ENCODE measurements at regions of chr1 and their contacts with region 1.

Region 1: GRCh38 chr1:153532769-153533599 is 2.8 kb downstream of the S100A6 start:
- DNase-seq: peak; percentile 81
- H3K4me3 Mint-ChIP-seq: peak overlapping the region; percentile 96
- H3K27ac Mint-ChIP-seq: peak overlapping the region; percentile 98
- H3K4me1 Mint-ChIP-seq: peaks cover 64% of the 10 kb centered on the region
- H3K27me3 Mint-ChIP-seq: no peaks in the 10 kb centered on the region

Region 2: GRCh38 chr1:153494976-153495535 is 37.9 kb before region 1 on chr1:
- CTCF ChIA-PET with region 1: no interaction called
- POLR2A ChIA-PET with region 1: no interaction called
- DNase-seq: peak; percentile 82
- H3K4me3 Mint-ChIP-seq: no peak overlapping the region
- H3K27ac Mint-ChIP-seq: no peak overlapping the region
- H3K4me1 Mint-ChIP-seq: no peaks in the 10 kb centered on the region
- H3K27me3 Mint-ChIP-seq: peaks cover 28% of the 10 kb centered on the region

Region 3: DNA sequence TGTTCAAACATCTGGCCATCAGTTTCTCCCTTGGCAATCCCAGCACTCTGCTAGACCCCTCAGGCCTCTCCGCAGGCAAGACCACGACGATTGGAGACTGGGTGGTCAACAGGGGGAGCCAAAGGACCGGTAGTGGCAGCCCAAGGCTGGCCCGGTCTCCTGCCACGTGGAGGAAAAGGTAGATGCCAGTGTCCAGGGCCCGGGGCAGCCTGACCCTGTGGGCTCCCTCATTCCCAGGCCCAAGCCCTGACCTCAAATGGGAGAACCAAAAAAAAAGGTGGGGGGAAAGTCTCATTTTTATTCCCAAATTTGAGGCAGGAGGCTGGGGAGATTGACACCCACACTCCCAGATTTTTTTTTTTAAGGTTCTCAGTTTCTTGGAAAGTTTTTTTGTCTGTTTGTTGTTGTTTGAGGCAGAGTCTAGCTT is 22.0 kb before region 1 on chr1:
- CTCF ChIA-PET with region 1: interaction called, 38 read pairs
- POLR2A ChIA-PET with region 1: no interaction called
- DNase-seq: peak; percentile 84
- H3K4me3 Mint-ChIP-seq: no peak overlapping the region
- H3K27ac Mint-ChIP-seq: peak overlapping the region; percentile 38
- H3K4me1 Mint-ChIP-seq: peaks cover 36% of the 10 kb centered on the region
- H3K27me3 Mint-ChIP-seq: no peaks in the 10 kb centered on the region

Region 4: GRCh38 chr1:153553830-153554541 is 21.0 kb after region 1 on chr1:
- CTCF ChIA-PET with region 1: interaction called, 17 read pairs
- POLR2A ChIA-PET with region 1: no interaction called
- DNase-seq: no peak
- H3K4me3 Mint-ChIP-seq: no peak overlapping the region
- H3K27ac Mint-ChIP-seq: no peak overlapping the region
- H3K4me1 Mint-ChIP-seq: peaks cover 9% of the 10 kb centered on the region
- H3K27me3 Mint-ChIP-seq: no peaks in the 10 kb centered on the region

Region 5: DNA sequence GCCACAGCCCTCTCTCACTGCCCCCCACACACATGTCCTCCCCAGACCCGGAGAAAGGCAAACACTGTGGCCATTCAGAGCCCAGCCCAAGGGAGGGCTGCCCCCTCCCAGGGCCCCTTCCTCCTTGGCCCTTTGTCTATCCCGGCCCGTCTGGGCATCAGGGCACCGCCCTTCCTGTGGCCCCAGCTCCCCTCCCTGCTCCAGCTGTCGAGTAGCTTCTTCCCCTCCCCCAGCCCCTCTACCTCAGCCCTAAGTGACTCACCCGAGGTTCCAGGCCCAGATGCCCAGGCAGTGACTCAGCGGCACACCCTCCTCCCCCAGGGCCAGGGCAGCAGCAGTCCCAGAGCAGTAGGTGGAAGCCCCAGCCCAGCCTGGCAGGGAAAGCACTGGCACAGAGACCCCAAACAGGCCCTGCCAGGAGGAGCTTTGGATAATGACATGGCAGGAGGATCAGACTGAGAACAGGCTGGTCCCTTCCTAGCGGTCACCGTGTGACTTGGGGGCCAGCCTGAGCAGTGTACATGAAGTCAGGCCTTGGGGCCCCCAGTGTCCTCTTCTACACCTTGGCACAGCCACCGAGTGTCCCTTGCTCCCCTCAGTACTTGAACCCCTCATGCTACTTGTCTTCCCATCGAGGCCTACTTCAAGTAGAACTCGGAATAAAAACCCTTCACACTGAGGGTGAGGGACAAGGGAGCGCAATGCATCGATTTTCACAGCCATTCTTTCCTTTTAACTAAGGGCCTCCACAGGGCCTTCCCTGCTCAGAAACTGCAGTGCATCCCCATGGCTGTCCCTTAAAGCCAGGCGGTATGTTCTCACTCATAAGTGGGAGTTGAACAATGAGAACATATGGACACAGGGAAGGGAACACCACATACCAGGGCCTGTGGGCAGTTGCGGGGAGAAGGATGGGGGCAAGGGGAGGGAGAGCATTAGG is 33.7 kb after region 1 on chr1:
- CTCF ChIA-PET with region 1: interaction called, 99 read pairs
- POLR2A ChIA-PET with region 1: interaction called, 6 read pairs
- DNase-seq: peak; percentile 80
- H3K4me3 Mint-ChIP-seq: peak overlapping the region; percentile 25
- H3K27ac Mint-ChIP-seq: peak overlapping the region; percentile 99
- H3K4me1 Mint-ChIP-seq: peaks cover 41% of the 10 kb centered on the region
- H3K27me3 Mint-ChIP-seq: no peaks in the 10 kb centered on the region

Region 6: GRCh38 chr1:153577624-153578051 is 44.7 kb after region 1 on chr1:
- CTCF ChIA-PET with region 1: interaction called, 99 read pairs
- POLR2A ChIA-PET with region 1: no interaction called
- DNase-seq: no peak
- H3K4me3 Mint-ChIP-seq: no peak overlapping the region
- H3K27ac Mint-ChIP-seq: no peak overlapping the region
- H3K4me1 Mint-ChIP-seq: peaks cover 15% of the 10 kb centered on the region
- H3K27me3 Mint-ChIP-seq: peaks cover 30% of the 10 kb centered on the region